K562 (cell line): ENCODE measurements at regions of chr14 and their contacts with region 1.

Region 1: DNA sequence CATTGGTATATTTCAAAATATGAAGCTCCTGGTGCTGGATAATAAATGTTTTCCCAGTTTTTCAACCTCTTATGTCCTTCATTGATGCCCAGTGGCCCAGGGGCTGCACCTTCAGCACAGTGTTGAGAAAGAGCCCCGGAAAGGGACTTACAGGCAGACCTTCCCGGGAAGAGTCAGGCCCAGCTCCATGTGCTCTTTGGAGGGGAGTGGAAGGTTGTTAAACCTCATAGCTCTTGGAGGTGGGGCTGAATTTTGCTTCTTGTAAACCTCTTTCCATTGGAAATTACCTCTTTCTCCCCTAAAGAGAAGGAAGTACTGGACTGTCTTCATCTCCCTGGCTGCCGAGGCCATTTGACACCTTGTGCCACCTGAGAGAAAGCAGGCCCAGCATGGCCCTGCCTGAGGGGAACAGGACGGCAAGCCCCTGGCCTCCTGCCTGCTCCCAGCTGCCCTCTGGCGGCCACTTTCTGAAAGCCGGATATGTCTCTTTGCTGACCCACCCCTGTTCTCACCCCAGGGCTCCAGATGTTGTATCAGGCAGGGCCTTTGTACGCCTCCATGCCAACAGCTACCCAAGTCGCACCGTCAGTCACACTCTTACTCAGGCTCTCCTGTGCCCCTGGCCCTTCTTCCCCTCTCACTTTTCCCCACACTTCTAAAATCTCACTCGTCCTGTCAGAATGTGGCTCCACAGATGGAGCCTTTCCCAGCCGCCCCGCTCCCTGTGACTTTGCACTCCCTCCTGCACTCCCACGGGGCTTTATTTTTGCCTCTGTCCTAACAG is 43.0 kb downstream of the EVL start:
- DNase-seq: peak; percentile 80 to 83 (median 81)
- ATAC-seq: peak; percentile 99
- H3K4me3 ChIP-seq: no peak overlapping the region
- H3K27ac ChIP-seq: no peak overlapping the region
- H3K4me1 ChIP-seq: peaks cover 18 to 19% of the 10 kb centered on the region in 2 experiments; a peak in 4 of 5 replicates
- H3K27me3 ChIP-seq: no peaks in the 10 kb centered on the region
- CTCF ChIP-seq: peak; percentile 78 to 90 (median 85)
- EP300 ChIP-seq: no peak
- POLR2A ChIP-seq: no peak
- RAD21 ChIP-seq: peak; percentile 66 to 87

Region 2: DNA sequence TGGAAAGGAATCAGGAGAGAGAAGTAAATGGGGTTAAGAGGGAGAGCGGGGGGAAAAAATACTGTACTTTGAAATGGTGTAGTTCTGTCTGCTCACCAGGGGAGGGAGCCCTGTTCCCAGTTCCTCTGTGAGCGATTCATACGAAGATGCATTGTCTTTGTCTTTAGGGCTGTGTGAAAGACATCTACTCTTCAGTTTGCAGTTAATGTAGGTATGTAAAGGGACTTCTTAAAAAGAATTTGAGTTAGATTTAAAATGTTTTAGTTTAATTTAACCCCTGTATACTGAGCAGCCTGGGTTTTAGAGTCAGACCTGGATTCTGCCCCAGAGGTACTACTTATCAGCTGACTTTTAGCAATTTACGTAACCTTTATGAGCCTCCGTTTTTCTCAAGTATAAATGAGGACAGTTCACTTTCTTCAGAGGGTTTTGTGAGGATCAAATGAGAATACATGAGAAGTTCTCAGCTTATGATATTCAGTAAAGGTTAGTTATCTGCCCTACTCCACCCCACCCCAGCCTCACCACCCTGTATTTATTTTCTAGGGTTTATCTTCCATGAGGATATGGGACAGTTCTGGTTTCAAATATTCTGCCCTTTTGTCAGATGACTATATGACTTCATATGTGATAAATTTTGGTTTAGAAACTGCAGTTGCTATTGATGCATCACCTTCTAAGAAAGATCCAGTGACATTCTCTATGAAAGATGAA is 125.5 kb before region 1 on chr14:
- CTCF ChIA-PET with region 1: interaction called, 15 read pairs
- POLR2A ChIA-PET with region 1: interaction called, 3 read pairs
- in situ Hi-C with region 1: loop called (anchors 10 kb)
- intact Hi-C with region 1: loop called (anchors 1 kb)
- DNase-seq: peak; percentile 57 to 75 (median 64)
- ATAC-seq: peak; percentile 95
- H3K4me3 ChIP-seq: no peak overlapping the region
- H3K27ac ChIP-seq: no peak overlapping the region
- H3K4me1 ChIP-seq: peaks cover 2 to 7% of the 10 kb centered on the region in 2 experiments; a peak in 3 of 5 replicates
- H3K27me3 ChIP-seq: no peaks in the 10 kb centered on the region
- CTCF ChIP-seq: peak; percentile 72 to 80 (median 75)
- EP300 ChIP-seq: no peak
- POLR2A ChIP-seq: no peak
- RAD21 ChIP-seq: peak; percentile 80 to 86

Region 3: DNA sequence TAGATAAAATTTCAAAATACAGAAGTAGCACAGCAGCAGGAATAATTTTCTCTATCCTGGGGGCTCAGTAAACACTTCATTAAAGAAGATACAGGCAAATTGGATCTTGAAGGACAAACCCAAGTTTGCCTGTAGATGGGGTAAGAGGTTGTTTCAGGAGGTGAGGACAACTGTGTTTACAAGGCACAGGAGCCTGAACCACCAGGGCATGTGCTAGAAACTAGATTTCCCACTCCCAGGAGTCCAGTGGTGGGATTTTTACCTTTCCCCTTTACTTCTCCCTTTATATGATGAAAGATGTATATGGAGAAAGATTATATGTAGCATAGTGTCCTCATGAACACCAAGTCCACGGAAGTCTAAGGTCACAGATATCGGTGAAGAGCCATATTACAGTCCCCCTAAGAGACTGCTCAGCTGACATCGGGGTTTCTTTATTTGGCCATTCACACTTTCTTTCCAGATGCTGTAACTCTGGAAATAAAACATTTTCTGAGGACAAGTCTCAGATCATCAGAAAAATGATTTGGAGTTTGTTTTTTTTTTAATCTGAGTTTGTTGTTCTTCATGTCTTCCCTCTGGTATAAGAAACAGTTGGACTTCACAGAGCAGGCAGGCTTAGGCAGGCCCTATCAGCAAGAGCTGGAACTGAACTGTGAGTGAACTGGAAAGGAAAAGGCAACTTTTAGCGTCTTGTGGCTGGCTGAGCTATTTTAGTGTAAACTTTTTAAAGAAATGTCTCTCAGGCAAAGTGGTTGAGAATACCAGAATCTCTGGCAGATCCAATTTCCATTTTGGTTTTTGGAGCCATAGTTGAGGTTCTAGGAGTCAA is 51.1 kb before region 1 on chr14:
- CTCF ChIA-PET with region 1: interaction called, 6 read pairs
- POLR2A ChIA-PET with region 1: no interaction called
- in situ Hi-C with region 1: no loop called
- intact Hi-C with region 1: loop called (anchors 1 kb)
- DNase-seq: peak in 2 of 4 experiments; percentile 33 to 45
- ATAC-seq: peak; percentile 84
- H3K4me3 ChIP-seq: no peak overlapping the region
- H3K27ac ChIP-seq: no peak overlapping the region
- H3K4me1 ChIP-seq: no peaks in the 10 kb centered on the region; a peak in 1 of 5 replicates
- H3K27me3 ChIP-seq: no peaks in the 10 kb centered on the region
- CTCF ChIP-seq: peak; percentile 23 to 48 (median 45); a peak in 4 of 6 replicates
- EP300 ChIP-seq: no peak
- POLR2A ChIP-seq: no peak
- RAD21 ChIP-seq: peak; percentile 43 to 55

Region 4: DNA sequence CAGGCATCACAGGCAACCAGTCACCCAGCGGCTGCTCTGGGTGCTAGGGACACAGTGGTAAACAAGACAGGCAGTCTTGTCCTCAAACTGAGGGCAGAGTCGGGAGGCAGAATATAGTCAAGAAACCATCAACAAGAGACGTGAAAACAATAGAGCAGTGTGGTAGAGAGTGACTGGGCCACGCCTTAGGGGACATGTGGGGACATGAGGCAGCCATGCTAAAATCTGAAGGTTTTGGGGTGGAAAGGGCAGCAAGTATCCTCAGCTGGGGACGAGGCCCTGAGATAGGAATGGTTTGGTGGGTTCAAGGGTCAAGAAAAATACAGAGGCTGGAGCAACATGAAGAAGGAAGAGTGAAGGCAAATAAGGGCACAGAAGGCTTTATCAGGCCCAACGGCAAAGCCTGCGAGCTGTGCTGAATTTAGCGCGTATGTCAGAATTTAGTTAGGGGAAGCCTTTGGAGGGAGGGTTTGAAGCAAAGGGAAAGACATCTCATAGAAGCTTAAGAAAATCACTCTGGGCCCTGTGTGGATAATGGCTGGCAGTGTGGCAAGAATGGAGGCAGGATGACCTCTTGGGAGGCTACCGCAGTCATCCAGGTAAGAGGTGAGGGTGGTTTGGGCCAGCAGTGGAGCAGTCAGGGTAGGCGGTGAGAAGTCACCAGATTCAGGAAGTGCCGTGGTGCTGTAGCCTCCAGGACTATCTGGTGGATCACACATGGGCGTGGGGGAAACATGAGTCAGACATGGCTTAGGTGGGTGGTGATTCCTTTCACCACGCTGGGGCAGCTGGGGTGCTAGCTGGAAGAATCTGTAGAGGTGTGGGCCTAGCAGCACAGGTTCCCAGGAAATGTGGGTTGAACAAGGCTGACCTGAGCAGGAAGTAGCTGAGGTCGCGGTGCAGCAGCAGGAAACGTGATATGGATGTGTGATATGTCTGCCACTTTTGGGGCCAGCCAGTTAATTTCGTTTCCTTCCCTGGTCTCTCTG is 40.0 kb before region 1 on chr14:
- CTCF ChIA-PET with region 1: interaction called, 10 read pairs
- POLR2A ChIA-PET with region 1: no interaction called
- in situ Hi-C with region 1: no loop called
- intact Hi-C with region 1: no loop called
- DNase-seq: peak; percentile 72 to 91 (median 76)
- ATAC-seq: peak; percentile 87
- H3K4me3 ChIP-seq: 0 out of 2 replicates have a peak overlapping the region, but pooled peaks have one; percentile 4
- H3K27ac ChIP-seq: peak overlapping the region; percentile 89
- H3K4me1 ChIP-seq: peaks cover 25 to 70% of the 10 kb centered on the region in 2 experiments
- H3K27me3 ChIP-seq: no peaks in the 10 kb centered on the region
- CTCF ChIP-seq: no peak
- EP300 ChIP-seq: peak; percentile 73; the same call in 1 of the 2 replicates
- POLR2A ChIP-seq: peak; percentile 75
- RAD21 ChIP-seq: no peak

Region 5: DNA sequence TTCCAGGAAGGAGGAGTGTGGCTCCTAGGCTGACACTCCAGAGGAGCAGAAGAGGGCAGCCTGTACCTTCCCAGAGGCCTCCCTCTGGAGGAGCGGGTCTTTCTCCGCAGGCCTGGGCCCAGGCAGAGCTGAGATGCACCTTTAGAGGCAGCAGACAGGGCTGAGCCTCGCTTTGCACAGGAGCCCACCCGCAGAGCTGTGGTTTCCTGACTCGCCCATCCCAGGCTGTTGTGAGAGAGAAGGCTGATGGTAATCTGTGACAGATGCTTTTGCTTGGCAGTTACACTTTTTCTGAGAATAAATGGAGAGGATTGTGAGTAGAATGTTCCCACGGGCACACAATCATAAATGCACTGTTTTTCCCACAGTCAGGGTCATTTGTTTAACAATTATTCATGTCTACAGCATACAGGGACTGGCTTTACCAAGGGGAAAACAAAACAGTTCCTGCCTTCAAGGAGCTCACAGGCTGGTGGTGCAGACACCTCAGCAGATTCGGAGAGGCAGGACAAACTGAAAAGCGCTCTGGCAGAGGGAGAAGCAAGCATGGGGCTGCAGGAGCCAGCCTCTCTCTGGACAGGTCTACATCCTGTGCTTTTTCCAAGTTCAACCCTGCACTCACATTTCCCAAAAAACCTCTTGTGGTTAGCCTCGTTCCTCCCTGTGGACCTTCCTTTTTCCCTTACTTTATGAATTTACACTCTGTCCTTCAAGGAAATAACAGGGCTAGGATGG is 29.1 kb before region 1 on chr14:
- CTCF ChIA-PET with region 1: interaction called, 7 read pairs
- POLR2A ChIA-PET with region 1: interaction called, 3 read pairs
- in situ Hi-C with region 1: no loop called
- intact Hi-C with region 1: loop called (anchors 1 kb)
- DNase-seq: peak; percentile 12 to 76 (median 36)
- ATAC-seq: peak; percentile 89
- H3K4me3 ChIP-seq: no peak overlapping the region
- H3K27ac ChIP-seq: peak overlapping the region; percentile 6; the same call in 2 of the 3 replicates
- H3K4me1 ChIP-seq: peaks cover 31 to 39% of the 10 kb centered on the region in 2 experiments
- H3K27me3 ChIP-seq: no peaks in the 10 kb centered on the region
- CTCF ChIP-seq: peak in 2 of 3 experiments; percentile 48 to 64; a peak in 4 of 6 replicates
- EP300 ChIP-seq: no peak
- POLR2A ChIP-seq: no peak
- RAD21 ChIP-seq: peak; percentile 40 to 58